Activated CD8-positive, alpha-beta memory T cell treated with anti-CD3 and anti-CD28 coated beads, Interleukin-2, amount 10 ng/mL, durations not matched to agents 7 days and 5 days (primary cell): ENCODE measurements at regions of chr15 and their contacts with region 1.

Region 1: GRCh38 chr15:90954712-90955671 is at the start of gene RCCD1:
- DNase-seq: peak; percentile 97
- ATAC-seq: peak; percentile 94
- H3K4me3 Mint-ChIP-seq: peak within 1 kb of the TSS; percentile 86
- H3K27ac Mint-ChIP-seq: peak within 1 kb of the TSS; percentile 95
- H3K4me1 Mint-ChIP-seq: peaks cover 21% of the 10 kb centered on the region
- H3K27me3 Mint-ChIP-seq: no peaks in the 10 kb centered on the region
- total RNA-seq, gene RCCD1: 35.4 to 50.1 TPM

Region 2: DNA sequence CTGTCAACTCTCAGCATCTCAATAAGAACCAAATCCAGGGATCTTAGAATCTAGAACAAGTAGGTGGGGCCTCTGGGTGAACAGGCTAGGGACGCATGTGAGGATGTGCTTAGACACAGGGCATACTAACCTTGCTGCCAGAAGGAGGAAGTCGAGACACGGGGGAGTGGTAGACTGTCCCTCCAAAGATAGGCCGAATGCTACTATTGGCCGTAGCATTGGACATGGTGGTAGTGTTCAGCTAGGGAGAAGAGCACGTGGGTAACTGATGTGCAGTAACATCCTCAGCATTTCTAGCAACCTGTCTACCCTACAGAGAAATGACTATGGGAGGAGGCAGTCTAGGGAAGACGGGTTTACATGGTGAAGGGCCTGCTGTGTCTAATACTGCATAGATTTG is 15.3 kb after region 1 on chr15:
- CTCF ChIA-PET with region 1: interaction called, 16 read pairs
- DNase-seq: no peak
- ATAC-seq: no peak
- H3K4me3 Mint-ChIP-seq: no peak overlapping the region
- H3K27ac Mint-ChIP-seq: no peak overlapping the region
- H3K4me1 Mint-ChIP-seq: peaks cover under 1% of the 10 kb centered on the region
- H3K27me3 Mint-ChIP-seq: no peaks in the 10 kb centered on the region

Region 3: DNA sequence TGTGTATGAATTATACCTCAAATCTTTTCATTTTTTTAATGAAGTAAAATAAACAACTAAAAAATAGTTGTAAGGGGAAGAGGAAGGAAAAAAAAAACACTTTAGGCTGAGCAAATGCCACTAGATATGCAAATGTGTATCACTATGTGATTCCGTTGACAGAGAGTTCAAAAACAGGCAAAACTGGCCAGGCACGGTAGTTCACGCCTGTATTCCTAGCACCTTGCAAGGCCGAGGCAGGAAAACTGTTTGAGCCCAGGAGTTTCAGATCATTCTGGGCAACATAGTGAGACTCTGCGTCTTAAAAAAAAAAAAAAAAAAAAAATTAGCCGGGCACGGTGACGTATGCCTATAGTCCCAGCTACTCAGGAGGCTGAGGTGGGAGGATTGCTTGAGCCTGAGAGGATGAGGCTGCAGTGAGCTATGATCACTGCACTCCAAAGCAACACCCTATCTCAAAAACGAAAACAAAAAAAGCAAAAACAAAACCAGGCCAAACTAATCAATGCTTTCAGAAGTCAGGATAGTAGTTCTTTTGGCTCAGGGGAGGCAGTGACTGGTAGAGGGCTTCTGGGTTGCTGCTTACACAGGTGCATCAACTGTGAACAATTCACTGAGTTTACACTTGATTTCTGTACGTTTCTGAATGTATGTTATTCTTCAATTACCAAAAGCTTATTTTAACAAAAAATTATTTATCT is 32.0 kb after region 1 on chr15:
- CTCF ChIA-PET with region 1: interaction called, 15 read pairs
- DNase-seq: no peak
- ATAC-seq: peak; percentile 50
- H3K4me3 Mint-ChIP-seq: no peak overlapping the region
- H3K27ac Mint-ChIP-seq: no peak overlapping the region
- H3K4me1 Mint-ChIP-seq: peaks cover 63% of the 10 kb centered on the region
- H3K27me3 Mint-ChIP-seq: no peaks in the 10 kb centered on the region

Region 4: GRCh38 chr15:91032919-91033803 is 78.2 kb after region 1 on chr15:
- CTCF ChIA-PET with region 1: interaction called, 21 read pairs
- DNase-seq: peak; percentile 76
- ATAC-seq: peak; percentile 85
- H3K4me3 Mint-ChIP-seq: no peak overlapping the region
- H3K27ac Mint-ChIP-seq: no peak overlapping the region
- H3K4me1 Mint-ChIP-seq: peaks cover 6% of the 10 kb centered on the region
- H3K27me3 Mint-ChIP-seq: peaks cover 19% of the 10 kb centered on the region

Region 5: GRCh38 chr15:91271565-91272153 is 316.7 kb after region 1 on chr15:
- CTCF ChIA-PET with region 1: interaction called, 17 read pairs
- DNase-seq: peak; percentile 69
- ATAC-seq: peak; percentile 72
- H3K4me3 Mint-ChIP-seq: no peak overlapping the region
- H3K27ac Mint-ChIP-seq: no peak overlapping the region
- H3K4me1 Mint-ChIP-seq: peaks cover 7% of the 10 kb centered on the region
- H3K27me3 Mint-ChIP-seq: peaks cover 32% of the 10 kb centered on the region